HEK293T (cell line): ENCODE measurements at regions of chr15 and their contacts with region 1.

Region 1: GRCh38 chr15:93018580-93018979 is 70.4 kb downstream of the RGMA start:
- DNase-seq: no peak

Region 2: DNA sequence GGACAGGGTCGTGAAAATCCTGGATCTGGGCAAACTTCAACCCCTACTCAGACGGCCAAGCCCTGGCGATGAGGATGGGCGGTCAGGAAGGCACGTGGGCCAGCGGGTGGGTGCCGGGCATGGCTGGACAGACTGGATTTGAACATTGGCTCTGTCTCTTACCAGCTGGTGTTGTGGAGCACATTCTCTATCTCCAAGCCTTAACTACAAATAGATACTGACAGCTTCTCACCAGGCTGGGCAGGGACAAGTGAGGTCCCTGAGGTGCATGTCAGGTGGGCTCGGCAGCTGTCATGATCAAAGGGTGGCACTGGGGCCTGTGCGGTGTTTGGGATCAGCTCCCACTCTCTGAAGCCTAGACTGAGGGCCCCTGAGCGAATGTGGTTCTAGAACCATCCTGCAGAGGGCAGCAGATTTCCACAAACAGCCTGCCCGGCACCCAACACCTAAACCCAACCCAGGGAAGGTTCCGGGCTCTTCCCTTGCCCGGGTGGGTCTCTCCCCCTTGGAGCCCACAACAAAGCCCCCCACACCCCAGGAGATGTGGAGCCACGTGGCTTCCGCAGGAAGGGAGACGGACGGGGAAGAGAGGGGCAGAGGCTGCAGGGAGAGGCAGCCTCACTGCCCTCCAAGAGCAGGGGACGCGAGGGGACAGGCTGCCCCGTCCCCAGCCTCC is 12.0 kb after region 1 on chr15:
- CTCF ChIA-PET with region 1: interaction called, 17 read pairs
- POLR2A ChIA-PET with region 1: no interaction called
- DNase-seq: peak; percentile 85

Region 3: DNA sequence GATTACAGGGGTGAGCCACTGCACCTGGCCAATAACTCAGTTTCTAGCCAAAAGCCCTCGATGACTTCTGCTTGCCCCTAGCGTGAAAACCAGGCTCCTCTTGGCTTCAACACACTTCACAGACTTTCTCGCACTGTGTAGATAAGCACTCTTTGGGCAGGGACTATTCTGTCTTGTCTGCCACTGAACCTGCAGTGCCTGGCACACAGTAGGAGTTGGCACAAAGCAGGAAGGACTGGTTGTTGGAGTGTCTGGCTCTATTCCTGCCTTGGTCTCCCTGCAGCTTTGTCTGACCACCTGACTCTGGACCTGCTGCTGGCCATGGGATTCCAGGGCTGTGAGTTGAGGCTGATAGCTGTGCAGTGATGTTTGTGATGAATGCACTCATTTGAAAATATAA is 116.9 kb after region 1 on chr15:
- CTCF ChIA-PET with region 1: no interaction called
- POLR2A ChIA-PET with region 1: no interaction called
- DNase-seq: no peak